Aorta (tissue), 5 donors: ENCODE measurements at regions of chr3 and their contacts with region 1.

Region 1: GRCh38 chr3:170171563-170171962 is 10.0 kb downstream of the PHC3 start:
- DNase-seq: no peak
- ATAC-seq: no peak
- H3K4me3 ChIP-seq: no peak overlapping the region
- H3K27ac ChIP-seq: no peak overlapping the region
- H3K4me1 ChIP-seq: peaks cover 0 to 2% of the 10 kb centered on the region in 2 donors
- H3K27me3 ChIP-seq: no peaks in the 10 kb centered on the region

Region 2: GRCh38 chr3:170117134-170117533 is 54.4 kb before region 1 on chr3:
- intact Hi-C with region 1: loop called in 1 of 2 experiments (anchors 10 kb)
- DNase-seq: no peak
- ATAC-seq: no peak
- H3K4me3 ChIP-seq: no peak overlapping the region
- H3K27ac ChIP-seq: no peak overlapping the region
- H3K4me1 ChIP-seq: no peaks in the 10 kb centered on the region
- H3K27me3 ChIP-seq: no peaks in the 10 kb centered on the region

Region 3: GRCh38 chr3:170317954-170318353 is 146.4 kb after region 1 on chr3:
- intact Hi-C with region 1: no loop called
- DNase-seq: no peak
- ATAC-seq: no peak
- H3K4me3 ChIP-seq: no peak overlapping the region
- H3K27ac ChIP-seq: no peak overlapping the region
- H3K4me1 ChIP-seq: no peaks in the 10 kb centered on the region
- H3K27me3 ChIP-seq: no peaks in the 10 kb centered on the region

Region 4: DNA sequence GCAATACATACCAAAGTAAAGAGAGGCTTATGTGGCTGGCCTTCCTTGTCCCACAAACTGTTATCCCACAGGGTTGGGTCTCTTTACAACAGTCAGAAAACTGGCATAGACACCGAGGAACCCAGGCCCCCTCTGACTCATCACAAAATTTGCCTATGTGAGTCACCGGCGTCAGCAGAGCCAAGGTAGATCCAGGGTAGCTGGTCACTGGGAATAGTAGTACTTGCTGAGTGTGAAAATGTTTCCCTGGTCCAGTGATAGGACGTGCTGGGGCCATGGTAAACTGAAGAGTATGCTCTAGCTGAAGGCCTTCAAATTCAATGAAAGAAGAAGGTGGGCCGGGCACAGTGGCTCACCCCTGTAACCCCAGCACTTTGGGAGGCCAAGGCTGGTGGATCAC is 158.8 kb after region 1 on chr3:
- intact Hi-C with region 1: no loop called
- DNase-seq: no peak
- ATAC-seq: no peak
- H3K4me3 ChIP-seq: no peak overlapping the region
- H3K27ac ChIP-seq: no peak overlapping the region
- H3K4me1 ChIP-seq: no peaks in the 10 kb centered on the region
- H3K27me3 ChIP-seq: no peaks in the 10 kb centered on the region